CD4-positive, alpha-beta T cell (primary cell): ENCODE measurements at regions of chr22 and their contacts with region 1.

Region 1: DNA sequence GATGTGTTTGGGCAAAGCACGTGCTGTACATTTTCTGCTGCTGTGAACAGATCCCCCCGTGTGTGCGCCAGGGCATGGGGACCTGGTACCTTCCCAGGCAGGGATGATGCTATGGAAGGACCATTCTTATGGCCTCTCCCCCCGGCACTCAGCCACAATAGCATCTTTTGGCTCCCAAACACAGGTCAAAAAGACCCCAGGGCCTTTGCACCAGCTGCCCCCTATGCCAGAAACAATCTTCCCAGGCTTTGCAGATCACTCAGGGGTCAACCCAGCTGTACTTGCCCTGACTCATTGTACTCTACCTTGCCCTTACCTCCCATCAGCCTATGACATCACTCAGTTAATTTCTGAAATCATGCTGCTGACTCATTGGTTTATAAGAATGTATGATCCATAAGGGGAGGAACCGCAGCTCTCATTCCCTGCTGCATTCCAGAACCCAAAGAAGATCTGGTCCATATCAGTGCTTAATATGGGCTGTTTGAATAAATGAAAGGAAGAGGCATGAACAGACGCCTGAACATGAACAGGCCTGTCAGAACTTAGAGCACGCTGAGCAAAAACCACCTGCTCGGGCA is 100.7 kb downstream of the CELSR1 start:
- DNase-seq: no peak
- ATAC-seq: no peak
- H3K4me3 ChIP-seq: no peak overlapping the region
- H3K4me3 Mint-ChIP-seq: no peak overlapping the region
- H3K27ac ChIP-seq: no peak overlapping the region
- H3K27ac Mint-ChIP-seq: no peak overlapping the region
- H3K4me1 ChIP-seq: peaks cover 13% of the 10 kb centered on the region
- H3K4me1 Mint-ChIP-seq: peaks cover 10% of the 10 kb centered on the region
- H3K27me3 ChIP-seq: no peaks in the 10 kb centered on the region
- H3K27me3 Mint-ChIP-seq: no peaks in the 10 kb centered on the region
- CTCF ChIP-seq: no peak

Region 2: GRCh38 chr22:46373921-46374662 is 62.6 kb before region 1 on chr22:
- CTCF ChIA-PET with region 1: no interaction called
- POLR2A ChIA-PET with region 1: no interaction called
- intact Hi-C with region 1: loop called in 1 of 2 experiments (anchors 5 kb)
- DNase-seq: peak in 7 of 14 experiments; percentile 8 to 64 (median 29)
- ATAC-seq: peak; percentile 53
- H3K4me3 ChIP-seq: no peak overlapping the region
- H3K4me3 Mint-ChIP-seq: peak overlapping the region; percentile 7
- H3K27ac ChIP-seq: no peak overlapping the region
- H3K27ac Mint-ChIP-seq: peak overlapping the region; percentile 19
- H3K4me1 ChIP-seq: peaks cover 46% of the 10 kb centered on the region
- H3K4me1 Mint-ChIP-seq: peaks cover 44% of the 10 kb centered on the region
- H3K27me3 ChIP-seq: no peaks in the 10 kb centered on the region
- H3K27me3 Mint-ChIP-seq: no peaks in the 10 kb centered on the region
- CTCF ChIP-seq: no peak

Region 3: GRCh38 chr22:46399251-46399999 is 37.3 kb before region 1 on chr22:
- CTCF ChIA-PET with region 1: no interaction called
- POLR2A ChIA-PET with region 1: no interaction called
- intact Hi-C with region 1: no loop called
- DNase-seq: peak in 1 of 14 experiments; percentile 17
- ATAC-seq: no peak
- H3K4me3 ChIP-seq: no peak overlapping the region
- H3K4me3 Mint-ChIP-seq: no peak overlapping the region
- H3K27ac ChIP-seq: no peak overlapping the region
- H3K27ac Mint-ChIP-seq: no peak overlapping the region
- H3K4me1 ChIP-seq: peaks cover 9% of the 10 kb centered on the region
- H3K4me1 Mint-ChIP-seq: no peaks in the 10 kb centered on the region
- H3K27me3 ChIP-seq: no peaks in the 10 kb centered on the region
- H3K27me3 Mint-ChIP-seq: no peaks in the 10 kb centered on the region
- CTCF ChIP-seq: no peak